Calu3 (cell line): ENCODE measurements at regions of chr1 and their contacts with region 1.

Region 1: GRCh38 chr1:94061513-94062443 is 59.2 kb downstream of the ABCA4 start:
- DNase-seq: peak; percentile 73
- H3K4me3 Mint-ChIP-seq: no peak overlapping the region
- H3K27ac Mint-ChIP-seq: no peak overlapping the region
- H3K4me1 Mint-ChIP-seq: peaks cover 29% of the 10 kb centered on the region
- H3K27me3 Mint-ChIP-seq: no peaks in the 10 kb centered on the region
- CTCF ChIP-seq: peak; percentile 82

Region 2: DNA sequence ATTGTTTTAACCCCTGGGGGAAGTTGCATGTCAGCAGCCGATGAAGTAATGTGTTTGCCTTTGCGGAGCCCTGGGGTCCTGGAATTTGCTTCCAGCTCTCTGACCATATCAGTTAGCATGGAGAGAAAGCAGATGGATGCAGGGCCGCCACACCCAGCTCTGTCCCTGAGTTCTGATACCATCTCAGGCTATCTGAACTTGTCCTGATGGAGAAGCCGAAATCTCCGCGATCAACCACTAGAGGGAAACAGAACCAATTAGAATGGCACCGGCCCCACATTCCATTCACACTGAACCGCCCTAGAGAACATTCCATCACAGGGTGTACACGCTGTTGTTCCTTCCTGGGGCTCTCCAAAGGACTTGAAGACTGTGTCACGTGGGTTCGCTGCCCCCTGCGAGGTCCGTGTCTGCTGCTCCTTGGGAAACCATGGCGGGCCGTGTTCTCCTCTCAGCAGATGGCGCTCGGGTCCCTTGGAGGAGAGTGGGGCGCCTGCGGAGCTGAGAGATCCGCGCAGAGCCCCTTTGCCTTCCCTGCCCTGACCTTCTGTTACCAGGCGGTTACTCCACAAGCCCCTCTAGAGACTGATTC is 16.2 kb before region 1 on chr1:
- CTCF ChIA-PET with region 1: interaction called, 16 read pairs
- intact Hi-C with region 1: no loop called
- DNase-seq: peak; percentile 89
- H3K4me3 Mint-ChIP-seq: peak overlapping the region; percentile 47
- H3K27ac Mint-ChIP-seq: peak overlapping the region; percentile 83
- H3K4me1 Mint-ChIP-seq: peaks cover 15% of the 10 kb centered on the region
- H3K27me3 Mint-ChIP-seq: no peaks in the 10 kb centered on the region
- CTCF ChIP-seq: no peak

Region 3: DNA sequence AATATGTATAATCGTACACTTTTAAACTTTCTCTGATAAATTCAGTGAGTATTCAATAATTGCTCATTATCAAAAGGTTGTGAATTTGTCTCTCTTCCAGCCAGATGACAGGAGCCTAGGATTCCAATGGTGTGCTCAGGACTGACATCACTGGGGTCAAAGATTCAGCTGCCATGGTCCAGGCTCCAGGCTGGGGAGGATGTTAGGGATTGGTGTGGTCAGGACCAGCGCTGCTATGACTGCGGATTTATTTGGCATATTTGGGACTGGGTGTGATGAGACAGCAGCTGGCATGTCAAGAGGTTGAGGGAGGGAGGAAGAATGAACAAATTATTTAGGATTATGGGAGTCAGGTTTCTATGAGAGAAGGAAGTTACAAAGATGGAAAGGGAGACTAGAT is 107.3 kb after region 1 on chr1:
- CTCF ChIA-PET with region 1: no interaction called
- intact Hi-C with region 1: loop called (anchors 5 kb)
- DNase-seq: no peak
- H3K4me3 Mint-ChIP-seq: no peak overlapping the region
- H3K27ac Mint-ChIP-seq: no peak overlapping the region
- H3K4me1 Mint-ChIP-seq: no peaks in the 10 kb centered on the region
- H3K27me3 Mint-ChIP-seq: no peaks in the 10 kb centered on the region
- CTCF ChIP-seq: no peak

Region 4: GRCh38 chr1:94237291-94238226 is 175.8 kb after region 1 on chr1 and contains the start of gene ARHGAP29:
- CTCF ChIA-PET with region 1: interaction called, 4 read pairs
- intact Hi-C with region 1: loop called (anchors 2 kb)
- DNase-seq: peak; percentile 95
- H3K4me3 Mint-ChIP-seq: peak within 1 kb of the TSS; percentile 83
- H3K27ac Mint-ChIP-seq: peak within 1 kb of the TSS; percentile 77
- H3K4me1 Mint-ChIP-seq: peaks cover 41% of the 10 kb centered on the region
- H3K27me3 Mint-ChIP-seq: no peaks in the 10 kb centered on the region
- CTCF ChIP-seq: no peak
- total RNA-seq, gene ARHGAP29: 57.9 and 62.6 TPM in 2 replicates